ENCODE measurements at regions of chr16 and their contacts with region 1.

Region 1: DNA sequence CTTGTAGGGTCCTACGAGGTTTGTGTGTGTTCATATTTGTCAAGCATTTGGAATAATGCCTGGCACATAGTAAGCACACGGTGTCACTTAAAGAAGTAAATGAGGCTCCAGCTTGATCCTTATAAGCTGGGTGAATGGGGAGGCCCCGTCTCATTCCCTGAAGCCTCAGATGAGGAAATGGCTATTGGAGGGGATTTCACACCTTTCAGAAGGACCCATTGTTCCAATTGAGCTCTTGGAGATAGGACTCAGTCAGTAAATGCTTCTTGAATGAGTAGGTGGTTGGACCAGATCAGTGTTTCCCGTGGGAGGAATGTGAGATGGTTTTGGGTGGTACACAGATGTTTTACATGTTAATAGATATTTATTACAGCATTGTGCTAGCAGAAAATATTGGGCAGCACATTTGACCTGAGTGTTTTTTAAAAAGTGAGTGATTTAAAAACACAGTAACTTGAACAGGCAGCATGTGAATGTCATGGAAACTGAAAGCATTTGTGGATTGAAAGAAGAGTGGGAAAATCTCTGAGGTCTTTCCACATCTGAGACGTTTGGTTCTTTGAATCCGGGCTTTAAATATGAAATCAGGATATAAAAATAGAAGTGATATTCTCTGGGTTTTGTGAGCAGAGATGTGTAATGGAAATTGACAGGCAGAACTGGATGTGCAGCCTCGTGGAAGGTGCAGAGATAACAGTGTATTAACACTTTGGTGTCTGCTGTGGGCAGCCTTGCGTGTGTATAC is 36.4 kb upstream of the ARHGAP17 start:
- DNase-seq: no peak
- ATAC-seq: no peak
- H3K4me3 ChIP-seq: no peak overlapping the region
- H3K27ac ChIP-seq: no peak overlapping the region
- H3K4me1 ChIP-seq: peaks cover 10 to 32% of the 10 kb centered on the region in 2 experiments
- H3K27me3 ChIP-seq: no peaks in the 10 kb centered on the region
- CTCF ChIP-seq: no peak
- EP300 ChIP-seq: no peak
- POLR2A ChIP-seq: no peak
- RAD21 ChIP-seq: no peak

Region 2: DNA sequence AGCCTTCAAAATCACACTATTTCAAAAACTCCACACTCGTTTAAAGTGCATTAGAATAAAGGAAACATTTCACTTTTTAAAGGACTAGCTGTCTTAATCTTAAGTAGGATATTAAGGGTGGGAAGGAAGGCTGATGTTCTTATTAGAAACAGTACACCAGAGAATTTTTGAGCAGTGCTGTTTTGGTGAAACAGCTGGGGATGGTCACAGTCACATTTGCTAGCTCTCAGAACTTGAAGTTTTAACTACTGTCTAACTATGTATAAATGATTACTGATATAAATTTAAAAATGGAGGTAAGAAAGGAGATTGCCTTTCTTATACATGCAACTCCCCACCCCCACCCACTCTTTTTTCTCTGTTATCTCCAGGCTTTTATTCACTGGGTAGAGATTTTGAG is 244.3 kb before region 1 on chr16:
- CTCF ChIA-PET with region 1: no interaction called
- POLR2A ChIA-PET with region 1: no interaction called
- in situ Hi-C with region 1: no loop called
- intact Hi-C with region 1: no loop called
- DNase-seq: no peak
- ATAC-seq: no peak
- H3K4me3 ChIP-seq: no peak overlapping the region
- H3K27ac ChIP-seq: no peak overlapping the region
- H3K4me1 ChIP-seq: no peaks in the 10 kb centered on the region
- H3K27me3 ChIP-seq: no peaks in the 10 kb centered on the region
- CTCF ChIP-seq: no peak
- EP300 ChIP-seq: no peak
- POLR2A ChIP-seq: no peak
- RAD21 ChIP-seq: no peak

Region 3: GRCh38 chr16:24986512-24987303 is 64.9 kb before region 1 on chr16:
- CTCF ChIA-PET with region 1: no interaction called
- POLR2A ChIA-PET with region 1: no interaction called
- in situ Hi-C with region 1: no loop called
- intact Hi-C with region 1: loop called (anchors 2 kb)
- DNase-seq: peak; percentile 38 to 89 (median 64)
- ATAC-seq: peak; percentile 92
- H3K4me3 ChIP-seq: no peak overlapping the region
- H3K27ac ChIP-seq: peak overlapping the region; percentile 59
- H3K4me1 ChIP-seq: peaks cover 12 to 43% of the 10 kb centered on the region in 2 experiments; a peak in 3 of 5 replicates
- H3K27me3 ChIP-seq: no peaks in the 10 kb centered on the region
- CTCF ChIP-seq: no peak
- EP300 ChIP-seq: peak; percentile 75; the same call in 1 of the 2 replicates
- POLR2A ChIP-seq: no peak
- RAD21 ChIP-seq: peak in 1 of 2 experiments; percentile 2; a peak in 1 of 4 replicates

Region 4: DNA sequence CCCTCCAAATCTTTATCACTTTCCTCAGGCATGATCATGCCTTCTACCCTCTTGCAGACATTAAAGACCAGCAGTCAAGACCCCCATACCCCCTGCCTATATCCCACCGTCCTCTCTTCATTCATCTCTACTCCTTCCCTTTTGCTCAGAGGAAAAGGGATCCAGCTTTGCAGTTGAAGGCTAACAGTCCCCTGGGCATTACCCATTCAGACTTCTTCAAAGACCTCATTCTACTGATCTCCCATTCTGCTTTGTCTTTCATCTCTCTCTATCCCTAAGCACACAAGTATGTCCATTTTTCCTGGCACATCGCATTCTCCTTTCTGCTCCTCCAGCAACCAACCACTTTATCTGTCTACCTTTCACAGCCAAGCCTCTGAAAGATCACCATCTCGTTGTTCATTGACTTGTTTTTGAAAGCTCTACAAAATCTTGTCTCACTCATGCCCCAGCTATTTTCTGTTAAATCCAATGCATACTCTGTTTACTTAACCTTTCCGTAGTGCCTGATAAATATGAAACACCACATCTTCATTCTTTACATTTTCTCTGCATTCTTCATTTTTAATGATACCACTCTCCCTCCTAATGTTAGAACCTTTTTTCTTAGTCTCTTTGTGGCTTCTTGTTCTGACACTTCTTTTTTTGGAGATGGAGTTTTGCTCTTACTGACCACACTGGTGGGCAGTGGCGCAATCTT is 45.8 kb after region 1 on chr16:
- CTCF ChIA-PET with region 1: no interaction called
- POLR2A ChIA-PET with region 1: no interaction called
- in situ Hi-C with region 1: no loop called
- intact Hi-C with region 1: no loop called
- DNase-seq: no peak
- ATAC-seq: no peak
- H3K4me3 ChIP-seq: no peak overlapping the region
- H3K27ac ChIP-seq: no peak overlapping the region
- H3K4me1 ChIP-seq: no peaks in the 10 kb centered on the region
- H3K27me3 ChIP-seq: peaks cover 7 to 12% of the 10 kb centered on the region in 2 experiments; a peak in 3 of 5 replicates
- CTCF ChIP-seq: no peak
- EP300 ChIP-seq: no peak
- POLR2A ChIP-seq: no peak
- RAD21 ChIP-seq: no peak

Region 5: GRCh38 chr16:25126820-25127232 is 75.2 kb after region 1 on chr16:
- CTCF ChIA-PET with region 1: no interaction called
- POLR2A ChIA-PET with region 1: no interaction called
- in situ Hi-C with region 1: no loop called
- intact Hi-C with region 1: loop called (anchors 1 kb)
- DNase-seq: peak in 3 of 4 experiments; percentile 21 to 39 (median 38)
- ATAC-seq: peak; percentile 76
- H3K4me3 ChIP-seq: no peak overlapping the region
- H3K27ac ChIP-seq: no peak overlapping the region
- H3K4me1 ChIP-seq: no peaks in the 10 kb centered on the region
- H3K27me3 ChIP-seq: no peaks in the 10 kb centered on the region
- CTCF ChIP-seq: peak; percentile 42 to 77 (median 74); a peak in 5 of 6 replicates
- EP300 ChIP-seq: no peak
- POLR2A ChIP-seq: no peak
- RAD21 ChIP-seq: peak; percentile 73 to 87

Region 6: DNA sequence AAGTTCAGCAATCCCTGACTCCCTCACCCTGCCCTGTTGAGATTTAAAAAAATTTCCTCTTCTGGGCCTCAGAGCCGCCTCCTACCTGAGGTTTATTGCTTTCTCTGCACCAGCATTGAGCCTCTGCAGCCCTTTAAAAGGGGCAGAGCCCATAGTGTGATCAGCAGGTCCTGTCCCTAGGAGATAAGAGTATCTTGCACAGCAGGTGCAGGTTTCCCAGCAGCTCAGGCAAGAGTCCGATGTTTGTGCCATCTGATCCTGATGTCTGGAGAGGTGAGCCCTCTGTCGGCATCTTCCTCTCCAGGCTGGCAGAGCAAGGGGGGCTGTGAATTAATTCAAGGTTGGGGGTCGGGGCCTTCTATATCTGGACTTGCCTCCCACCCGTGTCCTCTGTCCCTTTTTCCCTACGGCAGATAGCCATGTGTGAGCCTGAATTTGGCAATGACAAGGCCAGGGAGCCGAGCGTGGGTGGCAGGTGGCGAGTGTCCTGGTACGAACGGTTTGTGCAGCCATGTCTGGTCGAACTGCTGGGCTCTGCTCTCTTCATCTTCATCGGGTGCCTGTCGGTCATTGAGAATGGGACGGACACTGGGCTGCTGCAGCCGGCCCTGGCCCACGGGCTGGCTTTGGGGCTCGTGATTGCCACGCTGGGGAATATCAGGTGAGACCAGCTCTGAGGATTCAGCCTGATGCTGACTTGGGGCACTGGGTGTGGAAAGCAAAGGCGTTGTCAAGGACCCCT is 165.4 kb after region 1 on chr16 and contains the start of gene AQP8:
- CTCF ChIA-PET with region 1: no interaction called
- POLR2A ChIA-PET with region 1: no interaction called
- in situ Hi-C with region 1: no loop called
- intact Hi-C with region 1: loop called (anchors 2 kb)
- DNase-seq: peak; percentile 69 to 87 (median 80)
- ATAC-seq: peak; percentile 96
- H3K4me3 ChIP-seq: no peak within 1 kb of the TSS
- H3K27ac ChIP-seq: no peak within 1 kb of the TSS
- H3K4me1 ChIP-seq: peaks cover 12 to 17% of the 10 kb centered on the region in 2 experiments; a peak in 4 of 5 replicates
- H3K27me3 ChIP-seq: peaks cover 0 to 11% of the 10 kb centered on the region in 2 experiments; a peak in 2 of 5 replicates
- CTCF ChIP-seq: peak; percentile 5 to 42 (median 38); a peak in 2 of 6 replicates
- EP300 ChIP-seq: peak; percentile 88
- POLR2A ChIP-seq: no peak
- RAD21 ChIP-seq: peak; percentile 15 to 40; a peak in 2 of 4 replicates
- polyA plus RNA-seq, gene AQP8: not detected

Region 7: GRCh38 chr16:25224731-25225319 is 173.2 kb after region 1 on chr16:
- CTCF ChIA-PET with region 1: interaction called, 12 read pairs
- POLR2A ChIA-PET with region 1: interaction called, 3 read pairs
- in situ Hi-C with region 1: loop called (anchors 5 kb)
- intact Hi-C with region 1: loop called (anchors 1 kb)
- DNase-seq: no peak
- ATAC-seq: no peak
- H3K4me3 ChIP-seq: no peak overlapping the region
- H3K27ac ChIP-seq: no peak overlapping the region
- H3K4me1 ChIP-seq: peaks cover 3 to 4% of the 10 kb centered on the region in 2 experiments; a peak in 4 of 5 replicates
- H3K27me3 ChIP-seq: no peaks in the 10 kb centered on the region; a peak in 1 of 5 replicates
- CTCF ChIP-seq: no peak
- EP300 ChIP-seq: no peak
- POLR2A ChIP-seq: no peak
- RAD21 ChIP-seq: no peak